ENCODE measurements at regions of chr19 and their contacts with region 1.

Region 1: GRCh38 chr19:49676690-49677231 is 310 bp upstream of the PRMT1 start:
- DNase-seq: peak; percentile 100
- ATAC-seq: peak; percentile 91 to 92
- H3K4me3 ChIP-seq: peak overlapping the region; percentile 86
- H3K27ac ChIP-seq: peak overlapping the region; percentile 95
- H3K4me1 ChIP-seq: no peaks in the 10 kb centered on the region
- H3K27me3 ChIP-seq: no peaks in the 10 kb centered on the region

Region 2: GRCh38 chr19:49580264-49581006 is 96.3 kb before region 1 on chr19 and contains the start of gene NOSIP:
- intact Hi-C with region 1: loop called in 1 of 4 experiments (anchors 10 kb)
- DNase-seq: peak; percentile 94 to 97 (median 97)
- ATAC-seq: peak; percentile 96 to 97
- H3K4me3 ChIP-seq: peak within 1 kb of the TSS; percentile 92
- H3K27ac ChIP-seq: peak within 1 kb of the TSS; percentile 86
- H3K4me1 ChIP-seq: peaks cover 4% of the 10 kb centered on the region
- H3K27me3 ChIP-seq: no peaks in the 10 kb centered on the region
- total RNA-seq, gene NOSIP: 46.1 to 50.8 (median 48.3) TPM

Region 3: DNA sequence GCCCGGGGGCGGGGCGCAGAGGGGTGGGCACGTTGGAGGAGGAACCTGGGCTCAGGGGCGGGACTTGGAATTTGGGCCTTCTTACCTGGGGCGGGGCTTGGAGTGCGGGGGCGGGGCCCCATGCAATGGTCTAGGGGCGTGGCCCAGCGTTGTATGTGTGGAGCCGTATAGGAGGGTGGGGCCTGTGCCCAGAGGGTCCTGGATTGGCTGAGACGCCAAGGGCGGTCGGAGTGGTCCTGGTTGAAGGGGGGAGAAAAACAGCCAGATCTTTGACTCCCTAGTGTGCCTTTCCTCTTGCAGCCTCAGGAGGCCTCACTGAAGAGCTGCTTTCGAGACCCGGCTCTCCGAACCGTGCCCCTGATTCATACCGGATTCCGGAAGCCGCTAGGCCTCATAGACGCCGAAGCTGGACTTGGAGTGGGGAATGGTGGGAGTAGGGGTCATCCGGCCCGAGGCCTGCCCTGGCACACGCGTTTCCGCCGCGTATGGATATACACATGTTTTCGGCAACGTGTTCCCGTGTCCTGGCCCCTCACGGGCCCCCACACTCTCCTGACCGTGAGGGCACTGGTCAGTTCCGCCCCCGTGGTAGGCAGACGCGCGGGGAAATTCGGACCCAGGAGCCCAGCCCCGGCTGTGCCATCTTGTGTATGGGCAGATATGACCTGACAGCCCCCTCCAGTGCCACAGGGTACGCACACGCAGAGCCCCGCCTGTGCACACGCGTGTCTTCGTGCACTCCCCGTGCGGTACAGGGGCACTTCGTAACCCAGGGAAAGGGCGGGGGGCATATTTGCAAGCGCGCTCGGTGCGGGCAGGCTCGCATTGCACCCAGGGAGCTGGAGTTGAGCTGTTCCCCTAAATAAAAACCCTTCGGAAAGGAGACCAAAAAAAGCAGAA is 86.4 kb before region 1 on chr19:
- intact Hi-C with region 1: loop called in 2 of 4 experiments (anchors 10 kb)
- DNase-seq: peak; percentile 96 to 98 (median 98)
- ATAC-seq: peak; percentile 90 to 91
- H3K4me3 ChIP-seq: peak overlapping the region; percentile 98
- H3K27ac ChIP-seq: peak overlapping the region; percentile 89
- H3K4me1 ChIP-seq: peaks cover 5% of the 10 kb centered on the region
- H3K27me3 ChIP-seq: no peaks in the 10 kb centered on the region

Region 4: GRCh38 chr19:49766007-49766937 is 89.5 kb after region 1 on chr19:
- intact Hi-C with region 1: loop called in 1 of 4 experiments (anchors 10 kb)
- DNase-seq: peak; percentile 100
- ATAC-seq: peak; percentile 94 to 96
- H3K4me3 ChIP-seq: peak overlapping the region; percentile 56
- H3K27ac ChIP-seq: peak overlapping the region; percentile 96
- H3K4me1 ChIP-seq: peaks cover 5% of the 10 kb centered on the region
- H3K27me3 ChIP-seq: no peaks in the 10 kb centered on the region

Region 5: GRCh38 chr19:49850473-49851342 is 173.9 kb after region 1 on chr19 and contains the start of gene PTOV1:
- intact Hi-C with region 1: loop called in 1 of 4 experiments (anchors 10 kb)
- DNase-seq: peak; percentile 92 to 97 (median 97)
- ATAC-seq: peak; percentile 95
- H3K4me3 ChIP-seq: peak within 1 kb of the TSS; percentile 98
- H3K27ac ChIP-seq: peak within 1 kb of the TSS; percentile 98
- H3K4me1 ChIP-seq: peaks cover 6% of the 10 kb centered on the region
- H3K27me3 ChIP-seq: no peaks in the 10 kb centered on the region
- total RNA-seq, gene PTOV1: 127 to 146 (median 141) TPM

Region 6: DNA sequence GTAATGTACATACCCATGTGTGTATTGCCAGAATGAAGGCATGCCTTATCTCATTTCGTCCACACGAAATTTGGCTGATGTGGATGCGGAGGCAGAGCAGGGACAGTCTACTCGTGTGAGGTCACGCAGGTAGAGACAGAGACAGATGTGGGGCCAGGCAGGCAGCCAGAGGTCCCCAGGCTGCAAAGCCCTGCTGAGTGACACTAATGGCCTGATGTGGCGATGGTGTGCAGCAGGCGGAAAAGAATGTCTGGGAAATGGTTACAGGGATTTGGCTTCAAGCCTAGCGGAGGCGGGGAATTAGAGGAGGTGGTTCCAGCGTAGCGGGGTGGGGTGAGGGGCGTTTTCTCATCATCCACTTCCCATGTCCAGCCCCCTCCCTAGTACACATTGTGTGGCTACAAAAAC is 490.6 kb after region 1 on chr19:
- intact Hi-C with region 1: no loop called
- DNase-seq: no peak
- ATAC-seq: no peak
- H3K4me3 ChIP-seq: no peak overlapping the region
- H3K27ac ChIP-seq: no peak overlapping the region
- H3K4me1 ChIP-seq: no peaks in the 10 kb centered on the region
- H3K27me3 ChIP-seq: no peaks in the 10 kb centered on the region